Transverse colon (tissue), 4 donors: ENCODE measurements at regions of chr1 and their contacts with region 1.

Region 1: GRCh38 chr1:150813058-150813707 is 5.1 kb upstream of the CTSK start:
- DNase-seq: peak; percentile 80
- H3K4me3 ChIP-seq: no peak overlapping the region
- H3K27ac ChIP-seq: no peak overlapping the region
- H3K4me1 ChIP-seq: peaks cover 0 to 34% (median 9%) of the 10 kb centered on the region in 4 donors
- H3K27me3 ChIP-seq: no peaks in the 10 kb centered on the region
- CTCF ChIP-seq: peak; percentile 53 to 87 (median 77)
- EP300 ChIP-seq: no peak
- POLR2A ChIP-seq: no peak

Region 2: GRCh38 chr1:150629115-150629928 is 183.9 kb before region 1 on chr1 and contains the start of gene ENSA:
- in situ Hi-C with region 1: loop called in 1 of 4 experiments (anchors 25 kb)
- intact Hi-C with region 1: no loop called
- DNase-seq: peak; percentile 97
- H3K4me3 ChIP-seq: peak within 1 kb of the TSS; percentile 59 to 81 (median 73)
- H3K27ac ChIP-seq: peak within 1 kb of the TSS; percentile 91 to 99 (median 97)
- H3K4me1 ChIP-seq: peaks cover 4 to 22% (median 16%) of the 10 kb centered on the region in 4 donors
- H3K27me3 ChIP-seq: no peaks in the 10 kb centered on the region
- CTCF ChIP-seq: no peak
- EP300 ChIP-seq: no peak
- POLR2A ChIP-seq: peak; percentile 96
- total RNA-seq, gene ENSA: 111 to 174 (median 158) TPM

Region 3: DNA sequence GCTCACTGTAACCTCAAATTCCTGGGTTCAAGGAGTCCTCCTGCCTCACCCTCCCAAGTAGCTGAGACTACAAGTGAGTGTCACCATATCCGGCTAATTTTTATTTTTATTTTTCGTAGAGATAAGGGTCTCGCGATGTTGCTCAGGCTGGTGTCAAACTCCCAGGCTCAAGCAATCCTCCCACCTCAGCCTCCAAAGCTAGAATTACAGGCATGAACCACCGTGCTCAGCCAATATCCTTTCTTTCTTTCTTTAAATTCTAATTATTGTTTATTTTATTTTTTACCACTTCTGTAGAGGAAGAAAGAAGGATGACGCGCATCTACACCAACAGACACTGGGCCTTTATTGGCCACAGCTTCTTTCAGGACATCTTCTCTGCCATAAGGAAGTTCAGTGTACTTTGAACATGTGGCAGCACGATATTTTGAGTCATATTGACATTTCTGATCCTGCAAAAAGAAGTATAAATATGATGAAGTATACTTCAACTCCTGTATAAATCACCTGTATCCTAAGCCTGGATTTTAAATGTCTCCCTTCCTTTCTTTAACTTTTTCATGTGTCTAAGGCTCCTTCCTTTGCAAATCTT is 63.4 kb before region 1 on chr1:
- in situ Hi-C with region 1: no loop called
- intact Hi-C with region 1: no loop called
- DNase-seq: no peak
- H3K4me3 ChIP-seq: no peak overlapping the region
- H3K27ac ChIP-seq: peak overlapping the region; percentile 65 to 83 (median 79)
- H3K4me1 ChIP-seq: peaks cover 0 to 41% (median 16%) of the 10 kb centered on the region in 4 donors
- H3K27me3 ChIP-seq: no peaks in the 10 kb centered on the region
- CTCF ChIP-seq: no peak
- EP300 ChIP-seq: no peak
- POLR2A ChIP-seq: no peak